HCT116 (cell line): ENCODE measurements at regions of chr9 and their contacts with region 1.

Region 1: DNA sequence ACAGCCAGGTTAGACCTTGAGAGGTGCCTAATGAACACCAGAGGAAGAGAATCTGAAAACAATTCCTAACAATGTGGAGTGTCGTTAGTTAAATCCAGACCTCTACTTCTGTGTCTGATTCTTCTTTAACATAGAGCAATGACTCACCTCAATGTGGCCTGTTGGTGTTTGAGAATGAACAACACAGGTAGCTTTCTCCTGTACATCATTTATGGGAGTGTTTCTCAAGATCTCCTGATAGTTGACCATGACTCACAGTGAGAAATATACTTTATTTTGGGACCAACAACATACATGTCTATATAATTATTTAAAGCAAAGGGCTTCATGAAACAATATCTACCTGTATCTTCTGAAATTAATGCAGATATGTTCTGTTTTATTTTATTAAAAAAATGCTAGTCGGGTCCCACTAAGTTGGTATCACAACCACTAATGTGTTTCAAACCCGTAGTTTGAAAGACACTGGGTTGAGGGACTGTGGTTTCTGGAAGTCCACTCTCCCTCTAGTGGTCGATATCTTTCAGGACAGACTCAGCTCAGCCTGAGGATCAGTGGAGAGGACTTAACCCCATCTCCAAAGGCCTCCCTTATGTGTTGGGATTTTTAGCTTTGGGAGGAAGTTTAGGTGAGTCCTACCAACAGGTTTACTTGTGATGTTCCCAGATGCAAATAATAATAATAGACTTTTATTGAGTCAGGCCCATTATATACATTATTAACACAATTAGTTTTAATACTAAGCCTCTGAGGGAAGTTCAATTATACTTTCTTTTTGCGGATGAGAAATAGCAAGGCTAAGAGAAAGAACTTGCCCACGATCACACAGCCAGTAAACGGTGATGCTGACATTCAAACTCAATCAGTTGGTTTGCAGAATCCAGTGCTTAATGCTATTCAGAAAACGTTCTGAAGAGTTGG is 70.0 kb upstream of the KLF9 start:
- DNase-seq: peak; percentile 68
- ATAC-seq: peak; percentile 96
- H3K4me3 ChIP-seq: no peak overlapping the region
- H3K27ac ChIP-seq: no peak overlapping the region
- H3K4me1 ChIP-seq: peaks cover 7 to 24% of the 10 kb centered on the region in 2 experiments
- H3K27me3 ChIP-seq: no peaks in the 10 kb centered on the region
- CTCF ChIP-seq: peak; percentile 54 to 84 (median 81); a peak in 5 of 6 replicates
- POLR2A ChIP-seq: no peak
- RAD21 ChIP-seq: peak; percentile 78

Region 2: DNA sequence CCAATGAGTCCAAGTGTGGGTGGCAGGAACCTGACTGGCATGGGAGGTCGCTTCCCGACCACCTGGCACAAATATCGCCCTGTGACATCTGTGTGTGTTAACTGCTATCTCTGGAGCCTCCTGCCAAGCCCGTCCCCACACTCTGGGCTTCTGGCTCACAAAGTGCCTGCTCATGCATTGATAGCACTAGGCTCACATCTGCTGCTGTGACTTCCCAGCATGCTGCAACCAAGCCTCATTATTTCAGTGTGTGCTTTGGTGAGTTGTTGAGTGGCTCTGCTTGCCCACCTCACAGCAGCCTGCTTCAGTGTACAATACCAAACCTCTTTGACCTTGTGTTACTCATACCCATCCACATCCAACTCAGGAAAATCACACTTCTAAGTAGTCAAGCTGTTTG is 952.1 kb before region 1 on chr9:
- CTCF ChIA-PET with region 1: no interaction called
- POLR2A ChIA-PET with region 1: no interaction called
- RAD21 ChIA-PET with region 1: no interaction called
- intact Hi-C with region 1: no loop called
- DNase-seq: no peak
- ATAC-seq: no peak
- H3K4me3 ChIP-seq: no peak overlapping the region
- H3K27ac ChIP-seq: no peak overlapping the region
- H3K4me1 ChIP-seq: no peaks in the 10 kb centered on the region
- H3K27me3 ChIP-seq: peaks cover 46% of the 10 kb centered on the region
- CTCF ChIP-seq: no peak
- POLR2A ChIP-seq: no peak
- RAD21 ChIP-seq: no peak

Region 3: GRCh38 chr9:70340572-70340971 is 143.9 kb before region 1 on chr9:
- CTCF ChIA-PET with region 1: interaction called, 3 read pairs
- POLR2A ChIA-PET with region 1: no interaction called
- RAD21 ChIA-PET with region 1: no interaction called
- intact Hi-C with region 1: loop called (anchors 2 kb)
- DNase-seq: no peak
- ATAC-seq: no peak
- H3K4me3 ChIP-seq: no peak overlapping the region
- H3K27ac ChIP-seq: no peak overlapping the region
- H3K4me1 ChIP-seq: no peaks in the 10 kb centered on the region
- H3K27me3 ChIP-seq: no peaks in the 10 kb centered on the region
- CTCF ChIP-seq: peak; percentile 23 to 47 (median 46); a peak in 2 of 6 replicates
- POLR2A ChIP-seq: no peak
- RAD21 ChIP-seq: peak; percentile 68

Region 4: DNA sequence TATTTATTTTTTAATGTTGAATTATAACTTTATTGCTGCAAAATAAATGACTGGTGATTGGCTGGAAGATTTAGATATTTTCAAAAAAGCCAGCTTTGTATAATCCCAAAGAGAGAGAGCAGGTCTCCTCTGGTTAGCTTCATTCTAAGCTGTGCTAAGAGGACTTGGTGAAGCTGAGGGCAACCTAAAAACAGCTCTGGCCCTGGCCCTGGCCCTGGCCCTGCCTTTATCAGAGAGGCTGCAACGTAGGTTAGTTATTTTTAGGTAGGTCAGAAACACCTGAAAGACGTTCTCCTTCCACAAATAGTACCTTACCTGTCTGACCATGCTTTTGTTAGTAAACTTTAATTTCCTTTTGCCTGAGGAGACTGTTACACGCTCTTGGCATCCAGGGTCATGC is 128.7 kb before region 1 on chr9:
- CTCF ChIA-PET with region 1: no interaction called
- POLR2A ChIA-PET with region 1: no interaction called
- RAD21 ChIA-PET with region 1: no interaction called
- intact Hi-C with region 1: loop called (anchors 5 kb)
- DNase-seq: no peak
- ATAC-seq: no peak
- H3K4me3 ChIP-seq: no peak overlapping the region
- H3K27ac ChIP-seq: no peak overlapping the region
- H3K4me1 ChIP-seq: no peaks in the 10 kb centered on the region
- H3K27me3 ChIP-seq: no peaks in the 10 kb centered on the region
- CTCF ChIP-seq: no peak
- POLR2A ChIP-seq: no peak
- RAD21 ChIP-seq: no peak

Region 5: DNA sequence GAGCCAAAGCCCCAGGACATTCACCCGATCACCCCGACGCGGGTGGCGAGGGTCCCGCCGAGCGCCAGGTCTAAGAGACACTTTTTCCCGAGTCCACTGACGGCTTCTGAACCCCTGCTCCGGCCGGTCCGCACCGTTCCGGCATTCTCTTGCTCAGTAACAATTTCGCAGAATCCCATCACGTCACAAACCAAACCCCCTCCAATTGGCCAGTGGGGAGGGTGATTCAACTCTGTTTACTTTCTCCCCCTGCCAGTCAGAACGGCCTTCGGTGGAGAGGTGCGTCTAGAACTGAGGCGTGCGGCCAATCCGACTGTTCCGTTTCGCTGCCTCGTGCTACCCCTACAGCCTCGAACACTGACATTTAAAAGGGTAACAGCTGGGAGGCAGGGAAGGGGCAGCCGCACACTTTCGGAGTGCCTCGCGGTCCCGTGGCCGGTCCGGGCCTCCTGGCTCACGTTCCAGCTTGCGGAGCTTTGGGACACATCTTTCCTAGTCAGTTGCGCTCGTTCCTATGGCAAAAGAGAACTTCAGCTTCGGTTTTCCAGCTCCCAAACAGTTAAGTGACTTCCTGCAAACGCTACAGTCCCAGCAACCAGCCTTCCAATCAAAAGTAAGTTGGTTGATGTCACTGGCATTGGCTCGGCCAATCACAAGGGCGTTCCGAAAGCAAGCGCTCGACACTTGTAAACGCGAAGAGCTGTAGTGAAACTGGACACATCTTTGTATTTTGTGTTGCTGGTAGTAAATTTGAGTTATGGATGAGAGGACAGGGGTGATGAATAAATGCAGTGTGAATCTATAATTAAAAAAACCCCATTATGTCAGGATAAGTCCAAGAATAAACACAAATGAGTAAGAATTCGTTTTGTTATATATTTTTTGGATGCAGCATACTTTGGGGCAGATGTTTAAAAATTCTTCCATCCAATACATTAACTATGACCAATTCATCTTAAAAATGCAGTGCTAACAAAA is 70.4 kb before region 1 on chr9 and contains the start of gene KLF9:
- CTCF ChIA-PET with region 1: interaction called, 7 read pairs
- POLR2A ChIA-PET with region 1: interaction called, 3 read pairs
- RAD21 ChIA-PET with region 1: interaction called in 1 of 2 experiments, 6 read pairs
- intact Hi-C with region 1: loop called (anchors 1 kb)
- DNase-seq: peak; percentile 89
- ATAC-seq: peak; percentile 67
- H3K4me3 ChIP-seq: peak within 1 kb of the TSS; percentile 52 to 68
- H3K27ac ChIP-seq: peak within 1 kb of the TSS; percentile 54
- H3K4me1 ChIP-seq: peaks cover 29 to 66% of the 10 kb centered on the region in 2 experiments
- H3K27me3 ChIP-seq: no peaks in the 10 kb centered on the region
- CTCF ChIP-seq: no peak
- POLR2A ChIP-seq: no peak
- RAD21 ChIP-seq: no peak
- total RNA-seq, gene KLF9: 8.3 TPM

Region 6: DNA sequence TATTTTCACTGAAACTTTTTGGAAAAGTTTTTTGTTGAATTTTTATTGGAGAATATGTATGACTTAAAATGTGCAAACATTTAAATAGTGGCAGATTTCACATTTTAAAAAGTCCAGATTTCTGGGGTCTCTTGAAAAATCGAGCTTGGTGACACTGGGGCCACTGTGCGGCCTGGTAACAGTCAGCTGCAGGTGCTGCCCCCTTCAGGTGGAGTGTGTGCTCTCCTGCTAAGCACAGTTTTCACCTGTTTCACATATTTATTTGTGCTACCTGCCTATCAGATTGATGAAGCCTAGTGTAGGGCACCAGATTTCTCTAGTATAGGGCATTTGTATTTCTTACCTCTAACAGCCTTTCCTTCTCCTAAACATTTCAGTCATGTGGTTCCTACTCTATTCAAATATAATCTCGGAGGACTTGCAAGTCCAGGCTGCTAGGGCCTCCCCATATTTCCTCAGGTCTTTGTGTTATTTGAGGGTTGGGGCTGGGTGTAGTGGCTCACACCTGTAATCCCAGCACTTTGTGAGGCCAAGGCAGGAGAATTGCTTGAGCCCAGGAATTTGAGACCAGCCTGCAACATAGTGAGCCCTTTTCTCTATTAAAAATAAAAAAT is 25.8 kb after region 1 on chr9:
- CTCF ChIA-PET with region 1: interaction called, 10 read pairs
- POLR2A ChIA-PET with region 1: no interaction called
- RAD21 ChIA-PET with region 1: no interaction called
- intact Hi-C with region 1: no loop called
- DNase-seq: peak; percentile 24
- ATAC-seq: peak; percentile 93
- H3K4me3 ChIP-seq: no peak overlapping the region
- H3K27ac ChIP-seq: no peak overlapping the region
- H3K4me1 ChIP-seq: no peaks in the 10 kb centered on the region
- H3K27me3 ChIP-seq: no peaks in the 10 kb centered on the region
- CTCF ChIP-seq: peak; percentile 52 to 92 (median 92); a peak in 5 of 6 replicates
- POLR2A ChIP-seq: no peak
- RAD21 ChIP-seq: peak; percentile 56

Region 7: DNA sequence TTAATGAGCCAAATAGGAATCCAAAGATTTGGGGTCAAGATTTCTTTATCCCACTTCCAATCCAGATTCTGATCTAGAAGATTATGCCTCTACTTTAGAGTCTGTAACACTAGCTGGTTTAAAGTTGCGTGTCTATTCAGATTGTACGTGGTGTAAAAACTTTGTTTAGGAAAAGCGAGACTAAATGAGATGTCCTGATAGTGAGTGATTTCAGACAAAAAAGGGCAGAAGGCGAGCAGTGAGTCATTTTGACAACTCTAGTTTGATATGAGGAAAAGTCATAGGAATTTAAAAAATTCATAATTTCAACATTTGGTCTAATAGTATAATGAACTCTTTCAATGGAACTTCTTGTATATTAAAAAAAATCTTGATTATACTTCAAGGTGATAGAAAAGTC is 49.6 kb after region 1 on chr9:
- CTCF ChIA-PET with region 1: no interaction called
- POLR2A ChIA-PET with region 1: no interaction called
- RAD21 ChIA-PET with region 1: no interaction called
- intact Hi-C with region 1: loop called (anchors 10 kb)
- DNase-seq: no peak
- ATAC-seq: no peak
- H3K4me3 ChIP-seq: no peak overlapping the region
- H3K27ac ChIP-seq: no peak overlapping the region
- H3K4me1 ChIP-seq: no peaks in the 10 kb centered on the region
- H3K27me3 ChIP-seq: no peaks in the 10 kb centered on the region
- CTCF ChIP-seq: no peak
- POLR2A ChIP-seq: no peak
- RAD21 ChIP-seq: no peak

Region 8: GRCh38 chr9:70602321-70603019 is 118.0 kb after region 1 on chr9:
- CTCF ChIA-PET with region 1: no interaction called
- POLR2A ChIA-PET with region 1: no interaction called
- RAD21 ChIA-PET with region 1: no interaction called
- intact Hi-C with region 1: loop called (anchors 10 kb)
- DNase-seq: peak; percentile 65
- ATAC-seq: peak; percentile 98
- H3K4me3 ChIP-seq: no peak overlapping the region
- H3K27ac ChIP-seq: no peak overlapping the region
- H3K4me1 ChIP-seq: no peaks in the 10 kb centered on the region
- H3K27me3 ChIP-seq: no peaks in the 10 kb centered on the region
- CTCF ChIP-seq: peak; percentile 62 to 83 (median 73); a peak in 5 of 6 replicates
- POLR2A ChIP-seq: no peak
- RAD21 ChIP-seq: peak; percentile 92